ENCODE measurements at regions of chr6 and their contacts with region 1.

Region 1: DNA sequence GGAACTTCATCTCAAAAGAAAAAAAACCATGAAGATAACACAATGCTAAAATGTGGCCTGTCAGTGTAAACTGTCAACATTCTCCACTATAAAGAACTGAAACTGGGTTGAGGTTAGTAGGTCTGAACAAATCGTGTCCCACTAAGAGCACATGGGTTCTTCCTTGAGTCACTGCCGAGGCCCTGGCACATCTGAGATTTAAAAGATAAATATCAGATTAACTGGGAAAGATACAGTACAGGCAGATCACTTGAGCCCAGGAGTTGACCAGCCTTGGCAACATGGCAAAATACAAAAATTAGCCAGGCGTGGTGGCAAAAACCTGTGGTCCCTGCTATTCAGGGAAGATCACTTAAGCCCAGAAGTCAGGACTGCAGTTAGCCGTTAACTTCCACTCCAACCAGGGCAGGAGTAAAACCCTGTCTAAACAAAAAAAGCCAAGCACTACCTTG is 5.6 kb downstream of the EEF1A1 start:
- DNase-seq: peak in 1 of 5 donors; percentile 38
- H3K4me3 ChIP-seq: no peak overlapping the region
- H3K4me3 Mint-ChIP-seq: peak overlapping the region in 5 of 8 donors; percentile 18 to 83 (median 29)
- H3K27ac ChIP-seq: peak overlapping the region; percentile 31
- H3K27ac Mint-ChIP-seq: peak overlapping the region; percentile 70 to 99 (median 90)
- H3K4me1 ChIP-seq: peaks cover 55% of the 10 kb centered on the region
- H3K4me1 Mint-ChIP-seq: peaks cover 36 to 62% (median 47%) of the 10 kb centered on the region in 4 donors
- H3K27me3 ChIP-seq: no peaks in the 10 kb centered on the region
- H3K27me3 Mint-ChIP-seq: no peaks in the 10 kb centered on the region

Region 2: DNA sequence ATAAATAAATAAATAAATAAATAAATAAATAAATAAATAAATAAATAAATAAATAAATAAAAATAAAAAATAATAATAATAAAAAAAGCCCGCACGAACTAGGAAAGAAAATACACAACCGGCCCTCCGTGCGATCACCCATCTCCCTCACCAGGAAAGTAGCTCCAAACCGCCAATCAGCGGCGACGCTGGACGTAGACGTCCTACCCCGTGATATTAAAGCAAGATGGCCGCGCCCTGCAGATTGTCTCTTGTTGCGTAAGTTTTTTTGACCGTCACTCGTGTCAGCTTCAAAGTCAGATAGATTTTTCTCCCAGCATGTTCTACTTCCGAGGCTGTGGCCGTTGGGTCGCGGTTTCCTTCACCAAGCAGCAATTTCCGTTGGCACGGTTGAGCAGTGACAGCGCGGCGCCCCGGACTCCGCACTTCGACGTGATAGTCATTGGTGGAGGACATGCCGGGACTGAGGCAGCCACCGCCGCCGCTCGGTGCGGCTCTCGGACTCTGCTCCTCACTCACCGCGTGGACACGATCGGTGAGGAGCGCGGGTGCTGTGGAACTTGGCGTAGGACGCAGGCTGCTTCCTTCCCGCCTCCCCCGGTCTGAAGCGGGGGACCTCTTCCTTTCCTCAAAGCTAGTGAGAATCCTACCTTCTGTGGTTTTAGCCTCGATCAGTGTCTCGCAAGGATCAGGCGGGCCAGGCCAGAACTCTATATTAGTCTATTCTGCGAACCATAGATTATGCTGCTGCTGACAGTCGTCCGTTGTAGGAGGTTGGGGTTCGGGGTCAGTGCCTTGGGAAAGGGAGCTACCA is 53.5 kb before region 1 on chr6 and contains the start of gene MTO1:
- CTCF ChIA-PET with region 1: interaction called, 7 read pairs
- POLR2A ChIA-PET with region 1: interaction called, 106 read pairs
- intact Hi-C with region 1: no loop called
- DNase-seq: peak; percentile 83 to 93 (median 84)
- H3K4me3 ChIP-seq: peak within 1 kb of the TSS; percentile 89 to 100
- H3K4me3 Mint-ChIP-seq: peak within 1 kb of the TSS; percentile 95 to 99 (median 97)
- H3K27ac ChIP-seq: peak within 1 kb of the TSS; percentile 91
- H3K27ac Mint-ChIP-seq: peak within 1 kb of the TSS; percentile 95 to 100 (median 98)
- H3K4me1 ChIP-seq: peaks cover 46% of the 10 kb centered on the region
- H3K4me1 Mint-ChIP-seq: peaks cover 25 to 64% (median 44%) of the 10 kb centered on the region in 4 donors
- H3K27me3 ChIP-seq: no peaks in the 10 kb centered on the region
- H3K27me3 Mint-ChIP-seq: no peaks in the 10 kb centered on the region
- total RNA-seq, gene MTO1: 98.9 to 99.8 TPM

Region 3: DNA sequence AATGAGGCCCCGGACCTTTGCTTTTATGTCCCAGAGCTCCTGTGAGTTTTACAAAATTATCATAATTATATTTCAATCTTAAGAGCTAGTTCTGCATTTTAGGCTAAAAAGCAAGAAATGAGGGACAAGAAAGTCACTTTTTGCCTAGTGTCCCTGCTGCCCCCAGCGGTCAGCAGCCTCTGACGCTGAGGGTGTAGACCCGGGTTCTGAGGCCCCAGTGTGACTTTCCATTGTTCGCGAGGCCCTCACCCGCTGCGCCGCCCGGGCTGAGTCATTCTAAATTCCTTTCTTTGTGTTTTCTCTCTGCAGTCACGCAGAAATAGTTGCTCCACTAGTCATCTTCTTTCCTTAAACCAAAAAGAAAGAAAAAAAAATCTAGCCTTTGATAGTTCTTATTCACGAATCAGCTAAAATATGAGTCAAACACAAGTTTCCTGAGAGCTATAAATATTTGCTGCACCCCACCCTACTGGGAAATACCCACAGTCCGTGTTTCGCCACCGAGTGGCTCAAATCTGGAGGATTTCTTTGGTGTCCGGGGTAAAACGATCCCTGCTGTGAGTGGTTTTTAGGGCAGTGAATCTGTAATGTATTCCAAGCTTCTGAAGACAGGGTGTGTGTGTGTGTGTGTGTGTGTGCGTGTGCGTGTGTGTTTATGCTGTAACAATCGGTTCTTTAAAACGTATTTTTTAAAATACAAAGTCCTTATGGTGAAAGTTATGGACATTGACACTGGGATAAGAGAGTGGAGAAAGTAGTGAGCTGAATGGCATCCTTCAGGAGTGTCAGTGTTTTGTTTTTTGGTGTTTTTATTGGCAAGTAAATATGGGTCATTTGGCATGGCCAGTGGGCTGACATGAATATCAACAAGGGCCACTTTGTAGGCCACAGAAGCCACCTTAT is 65.3 kb after region 1 on chr6:
- CTCF ChIA-PET with region 1: interaction called, 27 read pairs
- POLR2A ChIA-PET with region 1: interaction called, 233 read pairs
- intact Hi-C with region 1: no loop called
- DNase-seq: peak; percentile 43 to 81 (median 47)
- H3K4me3 ChIP-seq: peak overlapping the region in 1 of 2 donors; percentile 12
- H3K4me3 Mint-ChIP-seq: peak overlapping the region; percentile 70 to 90 (median 84)
- H3K27ac ChIP-seq: peak overlapping the region; percentile 54
- H3K27ac Mint-ChIP-seq: peak overlapping the region; percentile 92 to 98 (median 97)
- H3K4me1 ChIP-seq: peaks cover 29% of the 10 kb centered on the region
- H3K4me1 Mint-ChIP-seq: peaks cover 11 to 33% (median 20%) of the 10 kb centered on the region in 4 donors
- H3K27me3 ChIP-seq: no peaks in the 10 kb centered on the region
- H3K27me3 Mint-ChIP-seq: no peaks in the 10 kb centered on the region

Region 4: DNA sequence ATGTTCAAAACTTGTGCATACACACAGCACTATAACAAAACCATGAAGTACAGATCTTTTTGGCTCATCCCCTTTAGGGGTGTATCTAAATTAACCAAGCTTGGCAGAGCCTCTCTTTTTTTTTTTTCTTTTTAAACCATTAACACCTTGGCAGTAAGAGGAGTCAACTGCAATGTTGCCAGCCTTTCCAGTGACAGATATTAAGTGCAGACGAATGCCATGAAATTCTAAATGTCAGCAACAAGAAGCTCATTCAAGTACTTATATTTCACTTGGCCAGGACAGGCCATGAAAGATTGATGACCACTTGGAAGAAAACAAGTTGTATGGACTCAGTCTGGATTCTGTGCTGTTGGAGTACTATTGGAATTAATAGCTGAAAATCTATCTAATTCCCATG is 88.8 kb after region 1 on chr6:
- CTCF ChIA-PET with region 1: interaction called, 222 read pairs
- POLR2A ChIA-PET with region 1: interaction called, 316 read pairs
- intact Hi-C with region 1: no loop called
- DNase-seq: no peak
- H3K4me3 ChIP-seq: no peak overlapping the region
- H3K4me3 Mint-ChIP-seq: no peak overlapping the region
- H3K27ac ChIP-seq: no peak overlapping the region
- H3K27ac Mint-ChIP-seq: no peak overlapping the region
- H3K4me1 ChIP-seq: no peaks in the 10 kb centered on the region
- H3K4me1 Mint-ChIP-seq: no peaks in the 10 kb centered on the region
- H3K27me3 ChIP-seq: no peaks in the 10 kb centered on the region
- H3K27me3 Mint-ChIP-seq: no peaks in the 10 kb centered on the region

Region 5: GRCh38 chr6:73675466-73676098 is 160.4 kb after region 1 on chr6:
- CTCF ChIA-PET with region 1: interaction called, 5 read pairs
- POLR2A ChIA-PET with region 1: no interaction called
- intact Hi-C with region 1: loop called (anchors 1 kb)
- DNase-seq: peak; percentile 52 to 66 (median 53)
- H3K4me3 ChIP-seq: no peak overlapping the region
- H3K4me3 Mint-ChIP-seq: no peak overlapping the region
- H3K27ac ChIP-seq: no peak overlapping the region
- H3K27ac Mint-ChIP-seq: peak overlapping the region in 1 of 7 donors; percentile 45
- H3K4me1 ChIP-seq: no peaks in the 10 kb centered on the region
- H3K4me1 Mint-ChIP-seq: peaks cover 0 to 3% (median 2%) of the 10 kb centered on the region in 4 donors
- H3K27me3 ChIP-seq: no peaks in the 10 kb centered on the region
- H3K27me3 Mint-ChIP-seq: peaks cover 13 to 16% of the 10 kb centered on the region in 2 donors

Region 6: GRCh38 chr6:73856315-73856714 is 341.1 kb after region 1 on chr6:
- CTCF ChIA-PET with region 1: no interaction called
- POLR2A ChIA-PET with region 1: no interaction called
- intact Hi-C with region 1: no loop called
- DNase-seq: no peak
- H3K4me3 ChIP-seq: no peak overlapping the region
- H3K4me3 Mint-ChIP-seq: no peak overlapping the region
- H3K27ac ChIP-seq: no peak overlapping the region
- H3K27ac Mint-ChIP-seq: peak overlapping the region in 1 of 7 donors; percentile 42
- H3K4me1 ChIP-seq: no peaks in the 10 kb centered on the region
- H3K4me1 Mint-ChIP-seq: peaks cover 0 to 2% (median 0%) of the 10 kb centered on the region in 4 donors
- H3K27me3 ChIP-seq: no peaks in the 10 kb centered on the region
- H3K27me3 Mint-ChIP-seq: no peaks in the 10 kb centered on the region

Measured in CD4-positive, alpha-beta memory T cell (primary cell).